Posterior vena cava (tissue), 2 donors: ENCODE measurements at regions of chr11 and their contacts with region 1.

Region 1: DNA sequence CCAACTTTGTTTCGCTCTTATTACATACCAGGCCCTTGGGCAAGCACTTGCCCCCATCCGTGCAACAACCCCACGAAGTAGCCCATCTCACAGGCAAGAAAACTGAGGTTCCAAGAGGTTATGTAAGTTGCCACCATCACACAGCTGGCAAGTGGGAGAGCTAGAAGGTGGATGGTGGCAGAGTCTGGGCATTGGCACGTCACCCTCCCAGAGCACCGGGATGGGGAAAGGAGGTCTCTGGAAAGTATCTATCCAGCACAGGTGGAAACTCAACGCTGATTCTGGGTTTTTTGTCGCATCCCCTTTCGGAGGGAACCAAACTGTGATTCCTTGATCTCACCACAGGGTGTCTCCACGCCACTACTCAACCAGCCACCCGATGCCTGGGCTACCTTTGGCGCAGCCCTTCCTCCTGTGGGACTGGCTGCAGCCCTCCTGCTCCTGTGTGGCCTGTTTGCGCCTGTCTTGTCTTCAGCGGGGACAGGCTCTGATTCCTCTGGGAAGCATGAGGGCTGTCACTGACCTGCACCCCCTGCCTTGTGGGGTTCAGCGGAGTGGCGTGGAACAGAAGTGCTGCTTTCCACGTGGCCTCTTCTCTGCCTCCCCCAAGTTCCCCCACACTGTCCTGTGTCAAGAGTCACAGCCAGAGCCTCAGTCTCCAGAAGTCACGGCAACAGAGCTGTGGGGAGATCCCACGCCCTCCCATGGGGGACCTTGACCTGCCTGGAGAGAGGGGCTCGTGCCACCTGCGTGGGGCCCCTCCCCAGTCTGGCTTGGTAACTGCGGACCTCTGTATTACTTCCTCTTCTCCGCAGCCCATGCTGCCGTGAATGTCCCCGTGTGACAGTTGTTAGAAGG is 34.4 kb upstream of the TRIM29 start:
- DNase-seq: peak; percentile 86

Region 2: GRCh38 chr11:120229451-120230424 is 57.5 kb after region 1 on chr11:
- intact Hi-C with region 1: loop called (anchors 1 to 2 kb)
- DNase-seq: no peak

Region 3: DNA sequence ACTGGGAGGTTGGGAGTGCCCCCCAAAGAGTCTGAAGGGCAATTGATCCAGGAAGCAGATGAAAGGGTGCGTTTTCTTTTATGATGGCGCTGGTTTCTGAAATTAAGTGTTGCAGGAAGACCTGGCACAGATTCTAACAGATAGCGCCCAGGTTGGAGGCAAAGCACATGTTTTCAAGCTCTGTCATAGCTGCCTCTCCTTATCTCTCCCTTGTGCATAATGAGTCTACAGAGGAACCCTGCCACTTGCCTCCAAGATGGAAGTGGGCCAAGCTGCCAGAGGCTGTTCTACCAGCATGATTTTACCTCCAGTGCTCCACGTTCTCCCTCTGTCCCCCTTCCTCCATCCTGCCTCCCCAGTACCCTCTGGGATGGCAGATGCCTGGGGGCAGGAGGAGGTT is 122.8 kb after region 1 on chr11:
- intact Hi-C with region 1: loop called in 1 of 2 experiments (anchors 5 kb)
- DNase-seq: peak; percentile 48

Region 4: GRCh38 chr11:120303004-120303637 is 130.8 kb after region 1 on chr11:
- intact Hi-C with region 1: loop called (anchors 2 to 5 kb)
- DNase-seq: peak; percentile 85